ENCODE measurements at regions of chr2 and their contacts with region 1.

Region 1: GRCh38 chr2:209334198-209335017 is 89.4 kb upstream of the MAP2 start:
- DNase-seq: peak; percentile 9 to 41 (median 21)
- ATAC-seq: 0 out of 3 replicates have a peak, but pooled peaks have one; percentile 42
- H3K4me3 ChIP-seq: no peak overlapping the region
- H3K27ac ChIP-seq: no peak overlapping the region
- H3K4me1 ChIP-seq: no peaks in the 10 kb centered on the region
- H3K27me3 ChIP-seq: no peaks in the 10 kb centered on the region
- CTCF ChIP-seq: peak; percentile 47 to 52 (median 51); a peak in 4 of 6 replicates
- EP300 ChIP-seq: no peak
- POLR2A ChIP-seq: no peak
- RAD21 ChIP-seq: peak; percentile 41 to 50

Region 2: DNA sequence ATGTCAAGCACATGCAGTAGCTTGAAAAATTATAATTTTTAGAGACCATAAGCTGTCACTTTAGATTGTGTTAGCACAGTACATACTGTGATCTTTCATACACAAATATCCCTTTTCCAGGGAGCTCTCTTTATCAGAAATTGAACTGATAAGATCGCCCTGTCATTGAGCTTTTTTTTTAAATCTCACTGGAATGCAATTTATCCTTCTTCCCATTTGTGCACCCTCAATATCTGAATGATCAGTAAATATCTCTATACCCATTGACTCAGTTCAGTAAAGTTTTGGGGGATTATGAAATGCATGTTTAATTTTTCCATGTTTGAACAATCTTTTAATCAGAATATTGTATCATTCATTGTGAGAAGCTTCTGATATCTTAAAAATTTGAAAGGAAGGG is 318.2 kb before region 1 on chr2:
- CTCF ChIA-PET with region 1: no interaction called
- POLR2A ChIA-PET with region 1: no interaction called
- in situ Hi-C with region 1: no loop called
- intact Hi-C with region 1: no loop called
- DNase-seq: no peak
- ATAC-seq: no peak
- H3K4me3 ChIP-seq: no peak overlapping the region
- H3K27ac ChIP-seq: no peak overlapping the region
- H3K4me1 ChIP-seq: no peaks in the 10 kb centered on the region
- H3K27me3 ChIP-seq: no peaks in the 10 kb centered on the region
- CTCF ChIP-seq: no peak
- EP300 ChIP-seq: no peak
- POLR2A ChIP-seq: no peak
- RAD21 ChIP-seq: no peak

Region 3: DNA sequence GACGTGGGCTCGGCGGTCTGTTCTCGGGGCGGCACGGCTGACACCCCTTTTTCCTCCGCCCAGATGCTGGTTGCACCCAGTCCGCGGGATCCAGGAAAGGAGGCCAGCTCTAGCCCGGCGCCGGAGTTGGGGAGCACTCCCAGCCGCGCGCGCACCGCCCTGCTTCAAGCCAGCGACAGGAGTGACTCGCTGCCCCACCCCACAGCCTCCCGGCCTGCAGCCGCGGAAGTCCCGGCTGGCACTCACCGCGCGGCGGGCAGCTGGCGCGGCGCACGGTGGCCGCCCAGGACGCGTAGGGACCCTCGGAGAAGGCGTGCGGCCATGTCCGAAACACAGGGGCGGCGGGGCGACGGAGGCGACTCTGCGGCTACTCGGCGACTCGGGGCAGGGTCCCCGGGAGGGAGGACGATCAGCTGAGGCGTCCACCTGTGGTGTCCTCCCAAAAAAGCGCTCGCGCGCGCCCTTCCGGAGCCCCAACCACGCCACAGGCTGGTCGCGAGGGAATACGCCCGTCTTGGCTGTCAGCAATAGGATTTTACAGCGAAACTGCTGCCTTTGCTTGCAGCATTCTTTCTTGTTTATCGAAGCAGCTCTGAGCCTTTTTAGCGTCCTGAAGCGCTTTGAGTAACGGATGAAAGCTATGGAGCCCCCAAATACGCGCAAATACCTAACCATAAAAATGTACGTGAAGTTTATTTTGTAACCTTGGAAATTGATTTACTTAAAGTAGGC is 890.7 kb after region 1 on chr2 and contains the start of gene ACADL:
- CTCF ChIA-PET with region 1: no interaction called
- POLR2A ChIA-PET with region 1: no interaction called
- in situ Hi-C with region 1: loop called (anchors 25 kb)
- intact Hi-C with region 1: no loop called
- DNase-seq: peak in 2 of 4 experiments; percentile 2 to 6
- ATAC-seq: no peak
- H3K4me3 ChIP-seq: no peak within 1 kb of the TSS
- H3K27ac ChIP-seq: no peak within 1 kb of the TSS
- H3K4me1 ChIP-seq: peaks cover 0 to 9% of the 10 kb centered on the region in 2 experiments; a peak in 2 of 5 replicates
- H3K27me3 ChIP-seq: peaks cover 0 to 16% of the 10 kb centered on the region in 2 experiments; a peak in 3 of 5 replicates
- CTCF ChIP-seq: no peak
- EP300 ChIP-seq: no peak
- POLR2A ChIP-seq: no peak
- RAD21 ChIP-seq: no peak
- polyA plus RNA-seq, gene ACADL: not detected

Measured in K562 (cell line).